PC-9 (cell line): ENCODE measurements at regions of chr2 and their contacts with region 1.

Region 1: GRCh38 chr2:120735746-120736170 is at the start of gene GLI2:
- DNase-seq: peak; percentile 63 to 85
- H3K4me3 ChIP-seq: peak within 1 kb of the TSS; percentile 63
- H3K27ac ChIP-seq: no peak within 1 kb of the TSS
- H3K4me1 ChIP-seq: peaks cover 15% of the 10 kb centered on the region
- H3K27me3 ChIP-seq: peaks cover 76% of the 10 kb centered on the region
- CTCF ChIP-seq: peak; percentile 79
- total RNA-seq, gene GLI2: 11.6 and 14.6 TPM in 2 replicates

Region 2: DNA sequence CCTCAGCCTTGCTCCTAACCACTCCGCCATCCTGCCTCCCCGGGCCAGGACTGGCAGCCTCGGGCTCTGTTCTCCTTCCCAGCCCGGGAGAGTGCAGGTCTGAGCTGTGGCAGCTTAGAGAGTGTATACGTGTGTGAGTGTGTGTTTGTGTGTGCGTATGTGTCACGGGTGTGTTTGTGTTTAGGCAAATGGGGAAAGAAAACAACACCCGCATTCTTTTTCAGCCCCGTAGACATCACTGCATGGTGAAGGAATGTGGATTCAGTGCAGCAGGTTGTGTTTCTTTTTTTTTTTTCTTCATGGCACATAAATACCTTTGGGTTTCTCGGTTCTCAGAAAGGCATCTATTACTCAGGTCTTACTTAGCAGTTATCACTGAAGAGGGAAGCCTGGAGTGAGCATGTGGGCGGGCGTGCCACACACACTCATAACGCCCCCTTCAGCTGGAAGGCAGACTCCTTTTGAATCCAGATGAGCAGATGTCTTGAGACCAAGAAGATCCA is 44.1 kb after region 1 on chr2:
- CTCF ChIA-PET with region 1: interaction called, 6 read pairs
- POLR2A ChIA-PET with region 1: interaction called, 4 read pairs
- intact Hi-C with region 1: loop called (anchors 1 kb)
- DNase-seq: peak; percentile 58 to 60
- H3K4me3 ChIP-seq: no peak overlapping the region
- H3K27ac ChIP-seq: no peak overlapping the region
- H3K4me1 ChIP-seq: no peaks in the 10 kb centered on the region
- H3K27me3 ChIP-seq: peaks cover 31% of the 10 kb centered on the region
- CTCF ChIP-seq: no peak; the same call in 1 of the 2 replicates

Region 3: GRCh38 chr2:120914839-120915521 is 179.2 kb after region 1 on chr2:
- CTCF ChIA-PET with region 1: no interaction called
- POLR2A ChIA-PET with region 1: no interaction called
- intact Hi-C with region 1: loop called (anchors 1 kb)
- DNase-seq: peak; percentile 46 to 87
- H3K4me3 ChIP-seq: no peak overlapping the region
- H3K27ac ChIP-seq: no peak overlapping the region
- H3K4me1 ChIP-seq: peaks cover 21% of the 10 kb centered on the region
- H3K27me3 ChIP-seq: no peaks in the 10 kb centered on the region
- CTCF ChIP-seq: no peak

Region 4: DNA sequence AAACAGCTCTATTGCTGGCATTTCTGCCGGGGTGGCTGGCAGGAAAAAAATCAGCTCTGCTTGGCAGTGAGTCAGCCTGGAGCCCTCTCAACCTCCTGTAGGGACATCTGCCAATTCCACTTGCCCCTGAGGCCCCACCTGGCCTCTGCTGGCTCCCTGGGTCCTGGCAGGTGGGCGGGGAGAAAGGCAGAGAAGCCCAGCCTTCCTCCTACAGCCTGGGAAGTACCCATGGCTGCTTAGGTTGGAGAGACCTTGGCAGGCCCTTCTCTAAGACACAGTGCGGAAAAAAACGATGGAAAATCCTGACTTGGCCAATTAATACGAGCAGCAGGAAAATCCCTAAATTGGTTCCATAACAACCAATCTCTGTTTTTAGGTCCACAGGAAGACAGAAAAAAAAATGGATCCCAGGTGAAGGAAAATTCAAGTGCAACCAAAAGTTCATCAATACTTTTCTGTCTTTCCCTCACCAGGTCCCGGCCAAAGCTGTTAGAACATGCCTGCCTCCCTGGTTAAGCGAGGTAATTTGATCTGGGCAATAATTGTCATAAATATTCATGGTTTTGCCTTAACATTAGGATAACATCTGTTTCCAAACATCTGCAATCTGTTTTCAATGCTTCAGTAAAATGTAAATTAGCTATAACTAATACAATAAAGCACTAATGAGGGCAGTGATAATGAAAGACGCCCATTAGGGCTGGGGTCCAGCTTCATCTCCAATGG is 303.3 kb after region 1 on chr2:
- CTCF ChIA-PET with region 1: no interaction called
- POLR2A ChIA-PET with region 1: interaction called, 12 read pairs
- intact Hi-C with region 1: no loop called
- DNase-seq: peak; percentile 68 to 92
- H3K4me3 ChIP-seq: no peak overlapping the region
- H3K27ac ChIP-seq: no peak overlapping the region
- H3K4me1 ChIP-seq: no peaks in the 10 kb centered on the region
- H3K27me3 ChIP-seq: peaks cover 41% of the 10 kb centered on the region
- CTCF ChIP-seq: no peak